ENCODE measurements at regions of chr5 and their contacts with region 1.

Region 1: DNA sequence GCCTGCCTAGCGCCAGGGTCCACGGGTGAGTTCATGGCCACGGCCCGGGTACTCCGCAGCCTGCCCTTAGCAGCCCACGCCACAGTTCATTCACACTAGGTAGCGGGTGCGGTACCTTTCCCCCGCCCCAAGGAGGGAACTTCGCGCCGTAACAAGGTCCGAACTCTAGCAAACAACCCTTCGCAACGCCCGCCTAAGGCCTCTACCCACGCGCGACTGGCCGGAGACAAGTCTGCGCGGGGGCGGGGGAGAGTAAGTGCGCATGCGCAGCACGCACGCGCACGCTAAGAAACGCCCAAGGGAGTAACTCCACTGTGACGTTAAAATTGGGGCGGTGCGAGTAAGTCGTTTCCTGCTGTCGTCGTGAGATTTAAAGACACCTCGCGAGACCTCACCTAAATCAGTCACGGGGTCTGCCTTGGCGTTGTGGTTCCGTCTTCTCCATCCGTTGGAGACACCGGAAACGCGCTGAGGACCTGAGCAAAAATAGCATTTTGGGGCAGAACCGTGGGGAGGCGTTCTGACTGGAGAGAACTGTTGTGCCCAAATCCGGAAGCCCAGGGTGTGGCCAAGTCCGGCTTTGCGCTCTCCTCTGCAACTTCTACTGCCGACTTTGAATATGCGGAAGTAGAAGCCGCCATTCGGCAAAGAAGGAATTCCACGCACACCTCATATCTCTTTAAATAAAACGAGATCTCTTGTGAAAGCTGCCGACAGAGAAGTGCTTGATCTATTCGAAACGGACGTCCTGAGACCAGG is at the start of gene RAPGEF6:
- DNase-seq: peak; percentile 99
- ATAC-seq: peak; percentile 89
- H3K4me3 Mint-ChIP-seq: peak within 1 kb of the TSS; percentile 95
- H3K27ac Mint-ChIP-seq: peak within 1 kb of the TSS; percentile 89
- H3K4me1 Mint-ChIP-seq: peaks cover 16% of the 10 kb centered on the region
- H3K27me3 Mint-ChIP-seq: no peaks in the 10 kb centered on the region
- CTCF ChIP-seq: no peak
- total RNA-seq, gene RAPGEF6: 27.0 to 34.1 TPM

Region 2: DNA sequence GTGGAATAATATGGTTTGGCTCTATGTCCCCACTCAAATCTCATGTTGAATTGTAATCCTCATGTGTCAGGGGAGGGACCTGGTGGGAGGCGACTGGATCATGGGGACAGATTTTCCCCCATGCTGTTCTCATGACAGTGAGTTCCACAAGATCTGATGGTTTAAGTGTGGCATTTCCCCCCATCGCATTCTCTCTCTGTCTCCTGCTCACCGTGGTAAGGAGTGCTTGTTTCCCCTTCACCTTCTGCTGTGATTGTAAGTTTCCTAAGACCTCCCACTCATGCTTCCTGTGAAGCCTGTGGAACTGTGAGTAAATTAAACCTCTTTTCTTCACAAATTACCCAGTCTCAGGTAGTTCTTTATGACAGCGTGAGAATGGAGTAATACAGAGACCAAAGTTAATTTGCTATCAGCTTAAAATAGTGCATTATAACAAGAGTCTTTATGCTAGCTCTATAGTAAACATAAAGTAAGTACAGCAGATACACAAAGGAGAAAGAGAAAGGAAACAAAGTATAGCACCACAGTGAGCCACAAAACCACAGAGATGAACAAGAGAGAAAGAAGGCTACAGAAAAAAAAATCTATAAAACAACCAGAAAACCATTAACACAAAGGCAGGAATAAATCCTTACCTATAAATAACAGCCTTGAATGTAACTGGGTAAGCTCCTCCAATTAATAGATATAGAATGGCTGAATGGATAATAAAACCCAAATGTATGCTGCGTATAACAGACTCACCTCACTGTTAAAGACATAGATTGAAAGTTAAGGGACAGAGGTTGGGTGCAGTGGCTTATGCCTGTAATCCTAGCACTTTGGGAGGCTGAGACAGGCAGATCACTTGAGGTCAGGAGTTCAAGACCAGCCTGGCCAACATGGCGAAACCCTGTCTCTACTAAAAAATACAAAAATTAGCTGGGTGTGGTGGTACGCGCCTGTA is 39.8 kb before region 1 on chr5:
- CTCF ChIA-PET with region 1: no interaction called
- POLR2A ChIA-PET with region 1: interaction called, 3 read pairs
- intact Hi-C with region 1: loop called (anchors 5 kb)
- DNase-seq: peak; percentile 32
- ATAC-seq: peak; percentile 83
- H3K4me3 Mint-ChIP-seq: peak overlapping the region; percentile 18
- H3K27ac Mint-ChIP-seq: peak overlapping the region; percentile 78
- H3K4me1 Mint-ChIP-seq: peaks cover 58% of the 10 kb centered on the region
- H3K27me3 Mint-ChIP-seq: no peaks in the 10 kb centered on the region
- CTCF ChIP-seq: no peak

Region 3: GRCh38 chr5:131796793-131797693 is 161.9 kb after region 1 on chr5 and contains the start of gene FNIP1:
- CTCF ChIA-PET with region 1: interaction called, 3 read pairs
- POLR2A ChIA-PET with region 1: interaction called, 9 read pairs
- intact Hi-C with region 1: loop called (anchors 5 kb)
- DNase-seq: peak; percentile 99
- ATAC-seq: peak; percentile 97
- H3K4me3 Mint-ChIP-seq: peak within 1 kb of the TSS; percentile 94
- H3K27ac Mint-ChIP-seq: peak within 1 kb of the TSS; percentile 92
- H3K4me1 Mint-ChIP-seq: peaks cover 30% of the 10 kb centered on the region
- H3K27me3 Mint-ChIP-seq: no peaks in the 10 kb centered on the region
- CTCF ChIP-seq: no peak
- total RNA-seq, gene FNIP1: 15.9 to 16.0 TPM

Measured in activated CD8-positive, alpha-beta T cell treated with anti-CD3 and anti-CD28 coated beads for 36 hours (primary cell).